Activated CD8-positive, alpha-beta T cell treated with anti-CD3 and anti-CD28 coated beads for 36 hours (primary cell): ENCODE measurements at regions of chr2 and their contacts with region 1.

Region 1: DNA sequence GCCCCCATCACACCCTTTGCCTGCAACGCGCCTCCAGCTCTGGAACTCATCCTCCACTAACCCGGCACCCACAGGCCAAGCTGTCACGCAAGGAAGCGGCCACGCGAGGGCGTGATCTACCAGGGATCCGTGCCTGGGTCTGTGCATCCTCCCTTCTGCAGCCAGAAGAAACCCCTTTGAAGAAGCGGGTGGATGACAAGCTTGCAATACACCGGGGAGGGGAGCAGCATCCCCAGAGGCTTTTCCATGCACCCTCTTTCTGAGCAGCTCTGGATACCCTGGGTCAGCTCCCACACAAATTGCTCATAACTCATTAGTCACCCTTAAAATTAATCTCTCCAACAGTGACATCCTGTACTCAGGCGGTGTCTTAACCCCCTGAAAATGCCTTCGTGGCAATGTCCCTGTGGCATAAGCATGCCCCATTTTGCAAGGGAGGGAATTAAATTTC is 47.6 kb downstream of the PDCL3 start:
- DNase-seq: peak; percentile 87
- ATAC-seq: peak; percentile 94
- H3K4me3 Mint-ChIP-seq: no peak overlapping the region
- H3K27ac Mint-ChIP-seq: no peak overlapping the region
- H3K4me1 Mint-ChIP-seq: no peaks in the 10 kb centered on the region
- H3K27me3 Mint-ChIP-seq: no peaks in the 10 kb centered on the region
- CTCF ChIP-seq: peak; percentile 61

Region 2: DNA sequence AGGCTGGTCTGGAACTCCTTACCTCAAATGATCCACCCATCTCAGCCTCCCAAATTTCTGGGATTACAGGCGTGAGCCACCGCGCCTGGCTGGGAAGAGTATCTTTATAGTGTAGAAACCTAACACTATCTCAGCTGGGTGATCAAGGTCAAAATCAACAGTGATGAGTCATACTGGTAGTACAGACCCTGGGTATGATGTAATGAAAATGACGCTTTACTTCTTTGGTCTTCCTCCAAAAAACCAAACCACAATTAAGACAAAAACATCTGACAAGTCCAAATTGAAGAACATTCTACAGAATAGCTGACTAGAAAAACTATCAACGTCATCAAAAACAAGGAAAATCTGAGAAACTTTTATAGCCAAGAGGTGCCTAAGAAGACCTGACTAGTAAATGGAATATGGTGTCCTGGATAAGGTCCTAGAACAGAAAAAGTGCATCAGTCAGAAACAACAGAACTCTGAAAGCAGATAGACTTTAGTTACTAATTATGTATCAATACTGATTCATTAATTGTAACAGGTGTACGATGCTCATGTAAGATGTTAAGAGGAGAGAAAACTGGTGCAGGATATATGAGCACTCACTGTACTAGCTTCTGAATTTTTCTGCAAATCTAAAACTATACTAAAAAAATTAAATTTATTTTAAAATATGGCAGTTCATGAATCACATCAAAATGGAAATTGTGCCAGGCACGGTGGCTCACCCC is 22.2 kb before region 1 on chr2:
- CTCF ChIA-PET with region 1: interaction called, 21 read pairs
- POLR2A ChIA-PET with region 1: no interaction called
- intact Hi-C with region 1: no loop called
- DNase-seq: peak; percentile 25
- ATAC-seq: peak; percentile 84
- H3K4me3 Mint-ChIP-seq: peak overlapping the region; percentile 3
- H3K27ac Mint-ChIP-seq: peak overlapping the region; percentile 78
- H3K4me1 Mint-ChIP-seq: peaks cover 35% of the 10 kb centered on the region
- H3K27me3 Mint-ChIP-seq: no peaks in the 10 kb centered on the region
- CTCF ChIP-seq: no peak

Region 3: GRCh38 chr2:100625717-100626116 is 15.3 kb after region 1 on chr2:
- CTCF ChIA-PET with region 1: interaction called, 10 read pairs
- POLR2A ChIA-PET with region 1: no interaction called
- intact Hi-C with region 1: no loop called
- DNase-seq: no peak
- ATAC-seq: no peak
- H3K4me3 Mint-ChIP-seq: no peak overlapping the region
- H3K27ac Mint-ChIP-seq: no peak overlapping the region
- H3K4me1 Mint-ChIP-seq: peaks cover 16% of the 10 kb centered on the region
- H3K27me3 Mint-ChIP-seq: no peaks in the 10 kb centered on the region
- CTCF ChIP-seq: no peak

Region 4: DNA sequence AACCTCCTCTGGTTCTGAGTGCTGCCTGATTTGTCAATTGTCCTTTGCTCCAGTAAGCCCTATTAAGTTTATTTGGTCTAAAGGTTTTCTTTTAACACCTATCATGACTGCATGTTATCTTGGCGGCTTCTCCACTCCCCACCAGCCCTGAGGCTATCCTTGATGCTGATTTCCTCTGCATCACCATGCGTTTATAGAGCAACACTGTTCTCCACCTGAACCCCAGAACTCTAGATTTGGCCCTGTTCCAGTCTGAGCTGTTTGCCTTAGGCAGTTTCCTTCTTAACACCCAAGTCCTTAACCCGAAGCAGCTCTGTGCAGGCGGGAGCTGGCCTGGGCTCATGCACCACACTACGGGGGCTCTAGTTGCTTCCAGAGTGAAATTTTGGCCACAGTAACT is 111.3 kb after region 1 on chr2:
- CTCF ChIA-PET with region 1: interaction called, 3 read pairs
- POLR2A ChIA-PET with region 1: no interaction called
- intact Hi-C with region 1: loop called (anchors 10 kb)
- DNase-seq: no peak
- ATAC-seq: no peak
- H3K4me3 Mint-ChIP-seq: no peak overlapping the region
- H3K27ac Mint-ChIP-seq: no peak overlapping the region
- H3K4me1 Mint-ChIP-seq: no peaks in the 10 kb centered on the region
- H3K27me3 Mint-ChIP-seq: no peaks in the 10 kb centered on the region
- CTCF ChIP-seq: no peak

Region 5: GRCh38 chr2:100730346-100730745 is 119.9 kb after region 1 on chr2:
- CTCF ChIA-PET with region 1: interaction called, 17 read pairs
- POLR2A ChIA-PET with region 1: no interaction called
- intact Hi-C with region 1: loop called (anchors 10 kb)
- DNase-seq: peak; percentile 72
- ATAC-seq: peak; percentile 61
- H3K4me3 Mint-ChIP-seq: no peak overlapping the region
- H3K27ac Mint-ChIP-seq: no peak overlapping the region
- H3K4me1 Mint-ChIP-seq: peaks cover 6% of the 10 kb centered on the region
- H3K27me3 Mint-ChIP-seq: peaks cover 1% of the 10 kb centered on the region
- CTCF ChIP-seq: peak; percentile 57

Region 6: GRCh38 chr2:100984892-100985379 is 374.5 kb after region 1 on chr2:
- CTCF ChIA-PET with region 1: interaction called, 61 read pairs
- POLR2A ChIA-PET with region 1: no interaction called
- intact Hi-C with region 1: loop called (anchors 2 kb)
- DNase-seq: peak; percentile 85
- ATAC-seq: peak; percentile 88
- H3K4me3 Mint-ChIP-seq: no peak overlapping the region
- H3K27ac Mint-ChIP-seq: no peak overlapping the region
- H3K4me1 Mint-ChIP-seq: no peaks in the 10 kb centered on the region
- H3K27me3 Mint-ChIP-seq: no peaks in the 10 kb centered on the region
- CTCF ChIP-seq: peak; percentile 85

Region 7: GRCh38 chr2:101400048-101400447 is 789.6 kb after region 1 on chr2:
- CTCF ChIA-PET with region 1: no interaction called
- POLR2A ChIA-PET with region 1: no interaction called
- intact Hi-C with region 1: no loop called
- DNase-seq: no peak
- ATAC-seq: no peak
- H3K4me3 Mint-ChIP-seq: no peak overlapping the region
- H3K27ac Mint-ChIP-seq: no peak overlapping the region
- H3K4me1 Mint-ChIP-seq: no peaks in the 10 kb centered on the region
- H3K27me3 Mint-ChIP-seq: peaks cover 21% of the 10 kb centered on the region
- CTCF ChIP-seq: no peak